Heart right ventricle (tissue), 16 donors: ENCODE measurements at regions of chr2 and their contacts with region 1.

Region 1: GRCh38 chr2:236569573-236569973 is at the start of gene ACKR3:
- DNase-seq: peak; percentile 75 to 86
- ATAC-seq: peak; percentile 66 to 89 (median 84)
- H3K4me3 ChIP-seq: peak within 1 kb of the TSS; percentile 38 to 73 (median 60)
- H3K27ac ChIP-seq: peak within 1 kb of the TSS; percentile 17 to 98 (median 94)
- H3K4me1 ChIP-seq: peaks cover 4 to 75% (median 53%) of the 10 kb centered on the region in 9 donors
- H3K27me3 ChIP-seq: peaks cover 0 to 6% (median 0%) of the 10 kb centered on the region in 7 donors
- CTCF ChIP-seq: peak in 8 of 9 donors; percentile 14 to 69 (median 47)
- total RNA-seq, gene ACKR3: 17.7 to 102 (median 49.3) TPM

Region 2: DNA sequence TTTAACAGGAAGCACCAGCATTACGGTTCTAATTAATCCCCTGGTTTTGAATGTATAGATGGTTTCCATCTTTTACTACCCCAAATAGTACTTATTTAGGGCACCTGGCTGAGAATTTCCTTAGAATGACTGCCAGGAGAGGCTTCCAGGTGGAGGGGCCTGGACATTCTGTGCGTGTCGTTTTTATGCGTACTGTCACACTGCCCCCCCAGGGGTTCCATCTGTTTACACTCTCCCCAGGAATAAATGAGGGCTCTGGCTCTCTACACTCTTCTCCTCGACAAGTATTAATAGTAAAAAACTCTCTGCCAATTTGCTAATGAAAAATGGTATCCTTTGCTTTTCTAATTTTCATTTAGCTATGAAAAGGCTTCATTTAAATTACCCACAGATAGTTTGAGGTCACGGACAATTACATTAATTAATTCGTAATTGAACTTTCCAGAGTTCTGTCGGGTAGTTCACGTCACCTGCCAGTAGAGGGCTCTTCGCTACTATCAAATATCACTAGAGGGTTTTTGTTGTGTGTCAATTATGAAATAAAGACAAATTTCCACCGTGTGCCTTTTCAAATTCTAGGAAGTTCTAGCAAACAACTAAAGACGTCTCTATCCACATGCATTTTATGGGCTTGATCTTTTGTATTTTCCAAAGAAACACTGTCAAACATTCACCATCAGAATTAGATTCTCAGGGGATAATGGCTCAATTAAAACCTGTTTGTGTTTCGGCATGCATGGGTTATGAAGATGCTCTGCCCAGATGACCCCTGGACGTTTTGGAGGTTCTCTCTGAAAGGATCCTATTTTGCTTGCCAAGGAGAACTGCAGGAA is 216.6 kb before region 1 on chr2:
- intact Hi-C with region 1: loop called in 5 of 10 experiments (anchors 5 to 10 kb)
- DNase-seq: no peak
- ATAC-seq: peak in 3 of 8 donors; percentile 46 to 57 (median 51)
- H3K4me3 ChIP-seq: no peak overlapping the region
- H3K27ac ChIP-seq: no peak overlapping the region
- H3K4me1 ChIP-seq: peaks cover 0 to 7% (median 0%) of the 10 kb centered on the region in 9 donors
- H3K27me3 ChIP-seq: no peaks in the 10 kb centered on the region
- CTCF ChIP-seq: peak; percentile 69 to 92 (median 84)

Region 3: GRCh38 chr2:236369661-236370062 is 199.9 kb before region 1 on chr2:
- intact Hi-C with region 1: loop called in 2 of 10 experiments (anchors 5 to 10 kb)
- DNase-seq: peak in 1 of 2 donors; percentile 46
- ATAC-seq: peak in 2 of 8 donors; percentile 56 to 66
- H3K4me3 ChIP-seq: no peak overlapping the region
- H3K27ac ChIP-seq: no peak overlapping the region
- H3K4me1 ChIP-seq: no peaks in the 10 kb centered on the region
- H3K27me3 ChIP-seq: peaks cover 0 to 45% (median 9%) of the 10 kb centered on the region in 7 donors
- CTCF ChIP-seq: no peak

Region 4: DNA sequence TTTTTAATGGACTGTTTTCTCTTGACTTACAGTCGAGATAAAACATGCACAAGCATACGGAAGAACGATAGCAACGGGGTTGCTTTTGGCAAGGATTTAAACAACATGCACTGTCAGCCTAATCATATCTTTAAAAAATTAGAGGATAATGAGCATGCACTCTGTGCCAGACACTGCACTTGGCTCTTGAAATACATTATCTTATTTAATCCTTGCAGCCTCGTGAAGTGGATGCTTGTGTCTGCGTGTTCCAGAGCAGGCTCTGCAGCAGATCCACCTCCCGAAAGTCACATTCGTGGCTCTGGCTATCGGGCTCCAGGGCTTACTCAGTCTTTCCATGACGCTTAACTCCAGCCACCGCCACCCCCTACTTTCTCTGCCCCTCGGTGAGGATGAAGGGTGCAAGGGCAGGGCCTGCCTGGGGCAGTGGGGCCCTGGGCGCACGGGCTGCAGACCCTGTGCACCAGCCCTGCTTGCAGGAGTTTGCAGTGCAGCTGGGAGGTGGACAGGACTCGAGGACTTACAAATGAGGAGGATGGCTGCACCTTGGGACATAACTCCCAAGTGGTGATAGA is 61.8 kb after region 1 on chr2:
- intact Hi-C with region 1: loop called in 1 of 10 experiments (anchors 2 kb)
- DNase-seq: peak; percentile 50 to 52
- ATAC-seq: peak in 7 of 8 donors; percentile 44 to 87 (median 80)
- H3K4me3 ChIP-seq: no peak overlapping the region
- H3K27ac ChIP-seq: peak overlapping the region in 6 of 10 donors; percentile 3 to 77 (median 58)
- H3K4me1 ChIP-seq: peaks cover 5 to 29% (median 18%) of the 10 kb centered on the region in 9 donors
- H3K27me3 ChIP-seq: no peaks in the 10 kb centered on the region
- CTCF ChIP-seq: no peak

Region 5: GRCh38 chr2:236687296-236687965 is 117.9 kb after region 1 on chr2:
- intact Hi-C with region 1: loop called in 3 of 10 experiments (anchors 5 kb)
- DNase-seq: peak; percentile 21 to 55
- ATAC-seq: peak in 7 of 8 donors; percentile 37 to 74 (median 51)
- H3K4me3 ChIP-seq: no peak overlapping the region
- H3K27ac ChIP-seq: peak overlapping the region in 9 of 10 donors; percentile 23 to 83 (median 71)
- H3K4me1 ChIP-seq: peaks cover 16 to 70% (median 33%) of the 10 kb centered on the region in 9 donors
- H3K27me3 ChIP-seq: no peaks in the 10 kb centered on the region
- CTCF ChIP-seq: no peak

Region 6: DNA sequence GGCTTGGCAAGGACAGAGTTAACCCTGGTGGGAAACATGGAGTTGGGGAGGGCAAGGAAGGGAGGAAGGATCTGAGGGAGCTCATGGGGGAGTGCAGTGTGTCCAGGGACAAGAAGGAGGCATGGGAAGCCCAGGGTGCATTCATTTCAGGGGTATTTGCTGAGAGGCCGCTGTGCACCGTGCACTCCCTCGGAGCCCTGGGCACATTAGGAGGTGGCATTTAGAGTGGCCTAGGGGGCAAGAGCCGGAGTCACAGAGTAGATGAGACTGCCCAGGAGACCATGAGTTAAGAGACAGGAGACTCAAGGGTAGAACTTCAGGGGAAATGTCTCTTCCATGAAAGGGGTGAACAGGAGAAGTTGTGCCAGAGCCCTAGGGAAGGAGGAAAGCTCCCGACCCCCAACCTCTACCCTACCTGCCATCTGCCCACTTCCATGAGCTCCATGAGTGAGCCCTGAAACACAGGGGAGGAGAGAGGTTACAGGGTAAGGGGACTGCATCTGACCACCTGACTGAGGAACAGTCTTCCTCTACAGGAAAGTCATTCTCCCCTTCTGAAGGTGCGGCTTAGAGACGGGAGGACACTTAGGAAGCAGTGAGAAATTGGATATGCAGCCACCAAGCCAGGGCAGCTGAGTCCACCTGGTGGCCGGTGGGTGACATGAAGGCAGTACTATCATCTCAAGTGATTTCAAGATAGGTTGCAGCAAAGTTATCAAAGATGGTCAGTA is 457.6 kb after region 1 on chr2:
- intact Hi-C with region 1: loop called in 6 of 10 experiments (anchors 2 to 5 kb)
- DNase-seq: peak; percentile 71 to 72
- ATAC-seq: peak; percentile 83 to 92 (median 89)
- H3K4me3 ChIP-seq: no peak overlapping the region
- H3K27ac ChIP-seq: peak overlapping the region in 1 of 10 donors; percentile 31
- H3K4me1 ChIP-seq: peaks cover 0 to 5% (median 0%) of the 10 kb centered on the region in 9 donors
- H3K27me3 ChIP-seq: no peaks in the 10 kb centered on the region
- CTCF ChIP-seq: peak; percentile 63 to 94 (median 86)